HepG2 (cell line): ENCODE measurements at regions of chr5 and their contacts with region 1.

Region 1: GRCh38 chr5:14168144-14168792 is 25.1 kb downstream of the TRIO start:
- DNase-seq: no peak
- ATAC-seq: peak; percentile 63
- H3K4me3 ChIP-seq: peak overlapping the region; percentile 12 to 29 (median 25); a peak in 4 of 6 replicates
- H3K27ac ChIP-seq: peak overlapping the region; percentile 60
- H3K4me1 ChIP-seq: peaks cover 96% of the 10 kb centered on the region
- H3K27me3 ChIP-seq: no peaks in the 10 kb centered on the region
- CTCF ChIP-seq: no peak
- EP300 ChIP-seq: no peak
- POLR2A ChIP-seq: no peak
- RAD21 ChIP-seq: no peak

Region 2: DNA sequence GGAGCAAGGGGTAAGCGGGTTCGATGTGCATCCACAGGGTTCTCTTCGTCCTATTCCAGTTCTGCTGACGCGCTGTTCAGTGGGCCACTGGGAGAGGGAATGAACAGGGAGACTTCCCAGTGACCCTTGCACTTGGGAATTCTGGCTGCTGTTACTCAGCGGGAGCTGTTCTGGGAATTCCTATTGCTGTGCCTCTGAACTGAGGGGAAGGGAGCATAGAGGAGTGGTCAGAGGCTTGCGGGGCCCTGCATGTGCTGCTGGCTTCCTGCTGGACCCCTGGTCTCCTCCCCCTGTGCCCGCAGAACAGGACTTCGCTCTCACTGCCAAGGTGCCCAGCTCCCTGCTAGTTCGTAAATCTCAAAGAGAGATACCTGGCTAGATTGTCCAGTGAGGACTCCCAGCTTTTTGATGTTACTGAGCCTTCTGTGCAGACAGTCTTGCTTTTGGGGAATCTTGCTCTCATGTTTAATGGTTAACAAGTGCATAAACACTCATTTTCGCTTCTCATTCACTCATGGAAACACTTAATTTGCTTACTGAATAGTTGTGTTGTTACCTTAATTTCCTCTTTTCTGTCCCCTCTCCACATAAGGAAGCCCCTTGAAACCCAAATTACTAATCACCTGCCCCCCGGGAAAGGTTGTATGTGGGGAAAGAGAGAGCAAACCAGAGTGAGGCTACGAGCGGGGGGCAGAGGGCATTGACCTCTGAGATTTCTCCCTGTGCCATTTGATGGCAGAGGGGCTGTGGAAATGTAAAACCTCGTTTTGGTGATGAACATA is 19.2 kb before region 1 on chr5:
- CTCF ChIA-PET with region 1: no interaction called
- POLR2A ChIA-PET with region 1: interaction called, 7 read pairs
- in situ Hi-C with region 1: no loop called
- intact Hi-C with region 1: loop called (anchors 1 kb)
- DNase-seq: peak; percentile 83
- ATAC-seq: peak; percentile 81
- H3K4me3 ChIP-seq: peak overlapping the region; percentile 44 to 64 (median 51)
- H3K27ac ChIP-seq: peak overlapping the region; percentile 77
- H3K4me1 ChIP-seq: peaks cover 87% of the 10 kb centered on the region
- H3K27me3 ChIP-seq: no peaks in the 10 kb centered on the region
- CTCF ChIP-seq: no peak
- EP300 ChIP-seq: no peak
- POLR2A ChIP-seq: peak in 1 of 2 experiments; percentile 44; a peak in 1 of 4 replicates
- RAD21 ChIP-seq: 0 out of 2 replicates have a peak, but pooled peaks have one; percentile 19

Region 3: DNA sequence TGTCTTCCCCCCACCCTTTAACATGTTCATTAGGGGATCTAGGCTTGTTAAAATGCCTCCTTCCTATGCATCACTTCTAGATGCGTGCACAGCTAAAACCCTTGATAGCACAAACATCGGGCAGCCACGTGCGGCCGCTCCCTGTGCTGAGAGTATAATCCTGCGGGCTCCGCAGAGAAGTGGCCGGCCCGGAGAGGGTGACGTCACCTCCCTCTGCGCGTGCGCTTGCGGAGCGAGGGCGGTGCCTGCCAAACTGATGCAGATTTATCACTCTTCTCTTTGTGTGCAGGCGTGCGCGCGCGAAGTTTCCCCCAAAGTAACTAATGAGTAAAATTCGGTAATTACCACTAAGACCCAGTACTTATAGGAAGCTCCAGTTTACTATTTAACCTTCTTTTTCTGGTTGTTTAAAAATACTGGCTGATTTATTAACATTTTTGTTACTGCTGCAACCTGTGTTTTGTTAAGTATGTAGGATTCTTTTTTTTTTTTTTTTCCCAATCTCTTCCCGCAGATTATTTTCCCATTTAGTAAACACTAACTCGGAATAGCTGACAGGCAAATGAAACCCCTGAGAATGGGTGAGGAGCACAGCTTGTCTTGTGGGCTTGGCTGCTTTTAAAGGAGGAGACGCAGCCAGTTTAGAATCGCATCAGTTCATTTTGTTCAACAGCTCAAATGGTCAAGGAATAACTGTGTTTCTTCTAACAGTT is 96.5 kb after region 1 on chr5:
- CTCF ChIA-PET with region 1: no interaction called
- POLR2A ChIA-PET with region 1: no interaction called
- in situ Hi-C with region 1: no loop called
- intact Hi-C with region 1: loop called (anchors 1 kb)
- DNase-seq: peak; percentile 78
- ATAC-seq: peak; percentile 97
- H3K4me3 ChIP-seq: peak overlapping the region; percentile 26 to 34 (median 32); a peak in 5 of 6 replicates
- H3K27ac ChIP-seq: no peak overlapping the region
- H3K4me1 ChIP-seq: peaks cover 64% of the 10 kb centered on the region
- H3K27me3 ChIP-seq: no peaks in the 10 kb centered on the region
- CTCF ChIP-seq: no peak
- EP300 ChIP-seq: no peak
- POLR2A ChIP-seq: peak; percentile 48 to 64; a peak in 3 of 4 replicates
- RAD21 ChIP-seq: peak; percentile 35; the same call in 1 of the 2 replicates